ENCODE measurements at regions of chr6 and their contacts with region 1.

Region 1: DNA sequence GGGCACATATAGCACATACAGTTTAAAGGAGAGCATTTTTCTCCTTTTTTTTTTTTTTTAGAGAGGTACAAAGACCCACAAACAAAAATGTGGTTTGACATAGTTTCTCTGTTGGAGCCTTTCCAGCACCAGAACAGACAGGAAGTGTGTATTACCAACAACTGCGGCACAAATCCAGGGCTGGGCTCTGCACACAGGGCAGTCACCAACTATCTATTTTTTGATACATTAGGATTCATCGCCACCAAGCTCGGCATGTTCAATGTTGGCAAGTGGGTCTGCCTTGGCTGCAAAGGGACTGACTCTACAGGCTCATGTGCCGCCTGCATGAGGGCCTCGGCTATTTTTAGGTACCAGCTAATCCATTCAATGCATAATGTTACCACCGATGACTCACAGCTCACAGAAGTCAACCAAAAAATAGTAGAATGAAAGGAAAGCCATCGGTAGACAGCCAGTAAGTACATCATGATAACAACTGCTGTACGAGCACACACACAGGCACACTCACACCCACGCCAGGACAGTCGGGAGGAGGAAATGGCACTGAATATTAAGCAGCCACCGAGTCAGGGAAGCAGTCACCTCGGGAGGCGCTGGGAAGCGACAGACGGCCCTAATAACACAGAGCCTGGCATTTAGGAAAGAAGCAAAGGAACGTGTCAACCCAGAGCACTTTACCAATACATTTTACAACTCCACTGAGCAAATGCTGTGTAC is 81.6 kb downstream of the GMPR start:
- DNase-seq: peak; percentile 41 to 89 (median 62)
- ATAC-seq: peak; percentile 55
- H3K4me3 ChIP-seq: peak overlapping the region; percentile 40
- H3K4me3 Mint-ChIP-seq: peak overlapping the region; percentile 70
- H3K27ac ChIP-seq: peak overlapping the region; percentile 63 to 93
- H3K27ac Mint-ChIP-seq: peak overlapping the region; percentile 94
- H3K4me1 ChIP-seq: peaks cover 82% of the 10 kb centered on the region
- H3K4me1 Mint-ChIP-seq: peaks cover 78% of the 10 kb centered on the region
- H3K27me3 ChIP-seq: no peaks in the 10 kb centered on the region
- H3K27me3 Mint-ChIP-seq: no peaks in the 10 kb centered on the region
- CTCF ChIP-seq: no peak

Region 2: DNA sequence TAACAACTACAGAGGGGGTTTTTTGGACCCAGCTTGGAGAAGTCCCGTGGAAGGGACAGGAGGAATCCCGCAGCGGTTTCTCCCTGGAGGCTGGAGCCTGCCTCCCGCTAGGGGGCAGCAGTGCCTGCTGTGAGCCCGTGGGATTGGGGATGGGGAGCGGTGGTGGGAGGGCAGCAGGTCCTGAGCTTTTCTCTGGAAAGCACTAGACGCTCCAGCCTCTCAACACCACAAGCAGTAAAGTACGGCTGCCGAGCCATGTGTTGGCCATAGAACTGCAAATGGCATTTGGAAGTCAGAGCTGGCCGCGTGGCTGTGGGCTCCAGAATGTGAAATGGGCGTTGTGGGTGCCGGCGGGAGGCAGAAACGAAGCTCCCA is 33.8 kb before region 1 on chr6:
- CTCF ChIA-PET with region 1: no interaction called
- POLR2A ChIA-PET with region 1: no interaction called
- intact Hi-C with region 1: no loop called
- DNase-seq: peak in 6 of 14 experiments; percentile 3 to 42 (median 13)
- ATAC-seq: no peak
- H3K4me3 ChIP-seq: no peak overlapping the region
- H3K4me3 Mint-ChIP-seq: no peak overlapping the region
- H3K27ac ChIP-seq: no peak overlapping the region
- H3K27ac Mint-ChIP-seq: no peak overlapping the region
- H3K4me1 ChIP-seq: no peaks in the 10 kb centered on the region
- H3K4me1 Mint-ChIP-seq: no peaks in the 10 kb centered on the region
- H3K27me3 ChIP-seq: no peaks in the 10 kb centered on the region
- H3K27me3 Mint-ChIP-seq: no peaks in the 10 kb centered on the region
- CTCF ChIP-seq: no peak

Region 3: DNA sequence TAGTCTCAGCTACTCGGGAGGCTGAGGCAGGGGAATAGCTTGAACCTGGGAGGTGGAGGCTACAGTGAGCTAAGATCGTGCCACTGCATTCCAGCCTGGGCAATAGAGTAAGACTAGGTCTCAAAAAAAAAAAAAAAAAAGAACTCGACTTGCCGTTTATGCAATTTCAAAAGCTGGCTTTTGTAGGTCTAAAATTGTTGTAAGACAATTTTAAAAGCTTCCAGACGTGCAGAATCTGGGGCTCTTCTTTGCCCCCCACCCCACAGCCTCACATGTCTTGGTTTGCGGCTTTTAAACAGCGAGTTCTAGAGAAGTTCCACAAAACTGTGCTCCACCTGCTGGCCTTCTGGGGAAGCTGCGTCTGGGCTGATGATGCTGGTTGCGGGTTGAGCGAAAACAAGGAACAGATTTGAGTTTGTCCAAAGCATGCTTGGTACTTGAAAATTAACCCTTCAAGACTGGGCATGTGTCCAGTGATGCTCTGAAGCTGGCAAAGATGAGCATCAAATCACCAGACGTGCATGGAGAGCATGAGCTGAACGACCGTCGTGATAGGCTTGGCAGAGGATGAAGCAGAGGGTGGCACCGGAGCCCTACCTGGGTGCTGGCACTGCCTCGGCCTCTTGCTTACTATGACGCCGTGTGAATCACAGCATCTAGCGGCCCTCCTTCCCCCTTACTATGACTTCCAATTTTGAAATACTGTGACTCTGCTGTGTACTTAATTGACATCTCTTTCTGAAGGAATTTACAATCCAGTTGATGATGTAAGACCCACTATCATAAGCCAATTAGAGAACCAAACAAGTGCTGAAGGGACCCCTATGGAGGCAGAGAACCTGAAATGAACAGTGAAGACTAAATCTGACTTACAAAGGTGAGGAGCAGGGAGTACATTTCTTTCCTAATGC is 89.8 kb after region 1 on chr6:
- CTCF ChIA-PET with region 1: interaction called, 7 read pairs
- POLR2A ChIA-PET with region 1: no interaction called
- intact Hi-C with region 1: loop called in 1 of 2 experiments (anchors 5 kb)
- DNase-seq: peak in 13 of 14 experiments; percentile 25 to 77 (median 50)
- ATAC-seq: peak; percentile 59
- H3K4me3 ChIP-seq: no peak overlapping the region
- H3K4me3 Mint-ChIP-seq: peak overlapping the region; percentile 1
- H3K27ac ChIP-seq: no peak overlapping the region
- H3K27ac Mint-ChIP-seq: peak overlapping the region; percentile 42
- H3K4me1 ChIP-seq: peaks cover 7% of the 10 kb centered on the region
- H3K4me1 Mint-ChIP-seq: peaks cover 36% of the 10 kb centered on the region
- H3K27me3 ChIP-seq: no peaks in the 10 kb centered on the region
- H3K27me3 Mint-ChIP-seq: no peaks in the 10 kb centered on the region
- CTCF ChIP-seq: peak; percentile 64